ENCODE measurements at regions of chr10 and their contacts with region 1.

Region 1: GRCh38 chr10:101042667-101043355 is 11.8 kb downstream of the SFXN3 start:
- DNase-seq: peak; percentile 96
- ATAC-seq: peak; percentile 96
- H3K4me3 Mint-ChIP-seq: peak overlapping the region; percentile 79
- H3K27ac Mint-ChIP-seq: peak overlapping the region; percentile 79
- H3K4me1 Mint-ChIP-seq: peaks cover 21% of the 10 kb centered on the region
- H3K27me3 Mint-ChIP-seq: peaks cover 14% of the 10 kb centered on the region

Region 2: GRCh38 chr10:101012525-101013364 is 30.1 kb before region 1 on chr10:
- CTCF ChIA-PET with region 1: interaction called, 20 read pairs
- POLR2A ChIA-PET with region 1: no interaction called
- intact Hi-C with region 1: no loop called
- DNase-seq: peak; percentile 90
- ATAC-seq: peak; percentile 85
- H3K4me3 Mint-ChIP-seq: no peak overlapping the region
- H3K27ac Mint-ChIP-seq: no peak overlapping the region
- H3K4me1 Mint-ChIP-seq: peaks cover 22% of the 10 kb centered on the region
- H3K27me3 Mint-ChIP-seq: peaks cover 25% of the 10 kb centered on the region

Region 3: DNA sequence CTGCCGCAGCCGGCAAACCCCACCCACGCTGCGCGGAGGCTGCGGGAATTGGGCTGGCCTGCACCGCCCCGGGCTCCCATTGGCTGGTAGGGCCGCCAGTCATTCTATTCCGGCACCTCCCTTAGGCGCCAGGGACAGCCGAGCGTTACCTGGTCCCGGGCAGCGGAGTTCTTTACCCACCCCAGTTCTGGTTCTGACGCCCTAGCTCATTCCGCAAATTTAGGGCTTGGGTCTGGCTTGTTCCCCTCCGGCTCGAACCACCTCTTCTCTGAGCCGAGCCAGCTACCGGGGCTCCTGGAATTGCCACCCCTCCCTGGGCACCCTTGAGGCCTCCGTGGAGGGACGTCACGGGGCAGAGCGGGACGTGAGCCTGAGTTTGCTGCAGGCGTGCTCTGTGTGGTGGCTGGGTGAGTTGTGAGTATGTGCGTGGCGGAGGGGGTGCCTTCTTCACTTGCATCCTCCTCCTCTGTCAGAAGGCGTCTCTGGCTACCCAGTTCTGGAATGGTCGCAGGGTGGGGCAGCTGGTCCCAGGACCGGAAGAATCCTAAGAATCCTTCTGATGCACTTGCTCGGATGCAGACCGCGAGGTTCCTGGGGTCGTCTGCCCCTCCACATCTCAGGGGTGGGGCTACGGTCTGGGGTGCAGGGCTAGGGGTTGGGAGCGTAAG is 11.5 kb before region 1 on chr10 and contains the starts of genes PDZD7 and SFXN3:
- CTCF ChIA-PET with region 1: interaction called, 31 read pairs
- POLR2A ChIA-PET with region 1: interaction called, 11 read pairs
- intact Hi-C with region 1: loop called (anchors 1 kb)
- DNase-seq: peak; percentile 98
- ATAC-seq: peak; percentile 85
- H3K4me3 Mint-ChIP-seq: peak within 1 kb of the TSS; percentile 80
- H3K27ac Mint-ChIP-seq: peak within 1 kb of the TSS; percentile 82
- H3K4me1 Mint-ChIP-seq: peaks cover 22% of the 10 kb centered on the region
- H3K27me3 Mint-ChIP-seq: no peaks in the 10 kb centered on the region
- total RNA-seq, gene PDZD7: 0.28 to 0.32 TPM
- total RNA-seq, gene SFXN3: 30.0 to 37.7 TPM

Region 4: GRCh38 chr10:101067356-101068083 is 24.7 kb after region 1 on chr10:
- CTCF ChIA-PET with region 1: interaction called, 526 read pairs
- POLR2A ChIA-PET with region 1: no interaction called
- intact Hi-C with region 1: loop called (anchors 1 kb)
- DNase-seq: peak; percentile 87
- ATAC-seq: peak; percentile 74
- H3K4me3 Mint-ChIP-seq: peak overlapping the region; percentile 72
- H3K27ac Mint-ChIP-seq: peak overlapping the region; percentile 25
- H3K4me1 Mint-ChIP-seq: peaks cover 28% of the 10 kb centered on the region
- H3K27me3 Mint-ChIP-seq: peaks cover 30% of the 10 kb centered on the region